Activated CD4-positive, alpha-beta memory T cell treated with anti-CD3 and anti-CD28 coated beads for 36 hours (primary cell): ENCODE measurements at regions of chr12 and their contacts with region 1.

Region 1: GRCh38 chr12:104695453-104696148 is 238.9 kb downstream of the CHST11 start:
- DNase-seq: peak; percentile 94
- H3K4me3 Mint-ChIP-seq: peak overlapping the region; percentile 16
- H3K27ac Mint-ChIP-seq: peak overlapping the region; percentile 92
- H3K4me1 Mint-ChIP-seq: peaks cover 74% of the 10 kb centered on the region
- H3K27me3 Mint-ChIP-seq: no peaks in the 10 kb centered on the region

Region 2: GRCh38 chr12:104456417-104456949 is 239.1 kb before region 1 on chr12 and contains the start of gene CHST11:
- CTCF ChIA-PET with region 1: interaction called, 5 read pairs
- POLR2A ChIA-PET with region 1: interaction called, 4 read pairs
- intact Hi-C with region 1: loop called (anchors 1 kb)
- DNase-seq: peak; percentile 89
- H3K4me3 Mint-ChIP-seq: peak within 1 kb of the TSS; percentile 99
- H3K27ac Mint-ChIP-seq: peak within 1 kb of the TSS; percentile 97
- H3K4me1 Mint-ChIP-seq: peaks cover 29% of the 10 kb centered on the region
- H3K27me3 Mint-ChIP-seq: no peaks in the 10 kb centered on the region
- total RNA-seq, gene CHST11: 58.3 to 59.0 TPM

Region 3: GRCh38 chr12:104494137-104494792 is 201.3 kb before region 1 on chr12:
- CTCF ChIA-PET with region 1: no interaction called
- POLR2A ChIA-PET with region 1: interaction called, 6 read pairs
- intact Hi-C with region 1: loop called (anchors 1 kb)
- DNase-seq: peak; percentile 89
- H3K4me3 Mint-ChIP-seq: peak overlapping the region; percentile 62
- H3K27ac Mint-ChIP-seq: peak overlapping the region; percentile 89
- H3K4me1 Mint-ChIP-seq: peaks cover 88% of the 10 kb centered on the region
- H3K27me3 Mint-ChIP-seq: no peaks in the 10 kb centered on the region

Region 4: GRCh38 chr12:104671407-104672098 is 24.0 kb before region 1 on chr12:
- CTCF ChIA-PET with region 1: interaction called, 3 read pairs
- POLR2A ChIA-PET with region 1: interaction called, 14 read pairs
- intact Hi-C with region 1: loop called (anchors 1 kb)
- DNase-seq: peak; percentile 94
- H3K4me3 Mint-ChIP-seq: peak overlapping the region; percentile 52
- H3K27ac Mint-ChIP-seq: peak overlapping the region; percentile 95
- H3K4me1 Mint-ChIP-seq: peaks cover 60% of the 10 kb centered on the region
- H3K27me3 Mint-ChIP-seq: no peaks in the 10 kb centered on the region

Region 5: DNA sequence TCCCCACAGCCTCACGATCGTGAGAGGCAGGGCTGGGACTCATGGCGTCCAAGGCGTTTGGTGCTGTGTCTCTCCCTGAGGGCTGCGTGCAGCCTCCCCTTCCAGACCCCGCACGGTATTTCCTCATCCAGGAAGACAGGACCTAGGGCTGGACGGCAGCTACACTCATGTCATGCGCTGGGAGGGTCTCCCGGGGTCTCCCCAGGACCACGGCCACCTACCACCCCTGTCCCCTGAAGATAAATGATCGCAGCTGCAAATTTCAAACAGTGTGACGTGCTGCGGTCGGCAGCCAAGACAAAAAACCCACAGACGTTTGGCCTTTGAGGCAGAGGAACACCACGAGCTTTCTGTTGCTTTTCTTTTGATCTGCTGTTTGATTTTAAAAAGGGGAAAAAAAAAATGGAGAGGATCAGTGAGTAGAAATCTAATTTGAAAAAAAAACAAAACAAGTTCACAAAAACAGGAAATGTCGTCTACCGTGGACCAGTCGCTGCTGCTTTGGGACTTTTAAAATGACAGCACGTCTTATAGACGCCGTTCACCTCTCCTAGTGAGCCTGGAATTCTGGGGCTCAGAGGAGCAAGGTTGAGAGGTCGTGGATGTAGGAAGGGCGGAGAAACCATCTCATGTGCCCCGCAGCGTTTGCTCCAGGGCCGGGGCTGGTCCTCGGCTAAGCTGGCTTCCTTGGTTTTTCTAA is 24.9 kb after region 1 on chr12:
- CTCF ChIA-PET with region 1: interaction called, 5 read pairs
- POLR2A ChIA-PET with region 1: interaction called, 5 read pairs
- intact Hi-C with region 1: loop called (anchors 1 kb)
- DNase-seq: peak; percentile 78
- H3K4me3 Mint-ChIP-seq: peak overlapping the region; percentile 74
- H3K27ac Mint-ChIP-seq: peak overlapping the region; percentile 89
- H3K4me1 Mint-ChIP-seq: peaks cover 39% of the 10 kb centered on the region
- H3K27me3 Mint-ChIP-seq: no peaks in the 10 kb centered on the region